SK-N-SH (cell line): ENCODE measurements at regions of chr5 and their contacts with region 1.

Region 1: DNA sequence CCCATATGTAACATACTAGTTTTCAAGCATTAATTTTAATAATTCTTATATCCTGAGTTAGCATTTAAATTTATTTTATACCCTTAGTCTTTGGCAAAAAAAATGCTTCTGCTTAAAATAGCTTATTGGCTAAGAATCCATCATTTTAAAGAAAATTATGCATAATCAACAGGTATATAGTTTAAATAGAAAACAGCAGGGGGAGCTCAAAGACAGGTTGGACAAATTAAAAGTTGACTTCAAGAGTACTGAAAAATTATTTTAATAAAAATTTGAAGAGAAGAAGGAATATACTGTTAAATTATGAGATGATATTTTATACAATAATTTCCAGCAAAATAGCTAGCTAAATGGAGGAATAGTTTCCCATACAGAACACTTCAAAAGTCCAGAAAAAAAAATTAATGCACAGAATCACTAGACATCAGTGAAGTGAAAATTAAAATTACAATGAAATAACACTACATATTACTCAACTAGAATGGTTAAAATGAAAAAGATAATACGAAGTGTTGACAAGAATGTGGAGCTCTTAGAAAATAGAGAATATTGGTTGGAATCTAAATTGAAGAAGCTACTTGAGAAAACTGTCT is 387.1 kb downstream of the PDE4D start:
- DNase-seq: no peak
- H3K4me3 ChIP-seq: no peak overlapping the region
- H3K27ac ChIP-seq: no peak overlapping the region
- H3K4me1 ChIP-seq: no peaks in the 10 kb centered on the region
- H3K27me3 ChIP-seq: no peaks in the 10 kb centered on the region
- CTCF ChIP-seq: peak; percentile 77
- EP300 ChIP-seq: no peak
- RAD21 ChIP-seq: peak; percentile 76

Region 2: DNA sequence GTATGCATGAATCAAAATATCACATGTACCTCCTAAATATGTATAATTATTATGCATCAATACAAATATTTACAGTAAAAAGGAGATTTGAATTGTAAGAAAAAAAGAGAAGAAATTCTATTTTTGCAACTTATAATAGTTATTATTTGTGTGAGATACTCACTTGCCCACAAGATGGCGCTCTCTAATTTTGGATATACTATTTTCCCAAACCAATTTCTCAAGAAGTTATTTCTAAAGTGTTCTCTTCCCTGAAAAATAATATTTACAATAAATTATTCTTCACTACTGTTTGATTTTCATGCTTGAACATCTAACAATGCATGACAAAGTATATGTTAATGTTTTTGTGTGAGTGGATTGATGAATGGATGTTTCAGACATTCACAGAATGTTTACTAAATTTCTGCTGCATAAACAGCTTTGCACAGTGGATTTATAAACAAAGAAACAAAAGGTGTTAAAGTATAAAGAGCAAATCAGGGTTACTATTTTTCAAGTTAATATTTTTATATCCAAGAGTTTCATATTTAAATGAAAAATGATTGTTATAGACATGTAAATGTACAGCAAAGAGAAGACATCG is 116.2 kb before region 1 on chr5:
- CTCF ChIA-PET with region 1: interaction called, 27 read pairs
- POLR2A ChIA-PET with region 1: no interaction called
- DNase-seq: no peak
- H3K4me3 ChIP-seq: no peak overlapping the region
- H3K27ac ChIP-seq: no peak overlapping the region
- H3K4me1 ChIP-seq: no peaks in the 10 kb centered on the region; a peak in 1 of 4 replicates
- H3K27me3 ChIP-seq: no peaks in the 10 kb centered on the region
- CTCF ChIP-seq: peak; percentile 88
- EP300 ChIP-seq: no peak
- RAD21 ChIP-seq: peak; percentile 78

Region 3: DNA sequence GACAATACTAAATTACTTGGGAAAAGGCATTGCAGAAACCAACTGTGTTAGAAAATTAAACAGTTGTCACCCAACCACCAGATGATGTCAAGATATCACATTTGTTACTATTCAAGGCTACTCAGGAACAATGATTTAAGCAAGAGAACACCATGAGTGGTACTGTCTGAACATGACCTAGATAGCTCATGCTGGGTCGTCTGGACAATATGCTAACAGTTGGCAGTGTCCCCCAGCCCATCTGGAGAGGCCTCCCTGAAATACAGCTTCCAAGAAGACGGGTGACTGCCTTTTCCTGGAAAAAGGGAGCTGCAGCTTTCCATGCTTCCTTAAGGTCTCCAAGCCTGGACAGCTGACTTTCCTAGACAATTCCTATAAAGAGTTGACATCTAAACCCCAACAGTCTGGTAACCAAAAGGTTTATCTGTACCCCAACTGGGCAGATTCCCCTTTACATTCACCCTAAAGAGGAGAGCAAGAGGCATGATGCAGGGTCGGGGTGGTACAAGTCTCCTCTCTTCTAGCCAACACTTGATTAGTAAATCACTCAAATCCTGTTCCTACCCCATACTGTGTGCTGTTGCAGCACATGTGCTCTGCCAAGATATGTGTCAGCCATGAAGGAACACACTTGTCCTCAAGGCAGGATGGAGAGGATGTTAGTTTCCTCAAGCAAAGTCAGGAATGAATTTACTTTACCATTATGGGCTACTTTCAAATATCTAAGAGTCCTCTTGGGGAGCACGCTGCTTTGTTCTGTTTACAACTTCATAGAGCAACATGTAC is 45.8 kb before region 1 on chr5:
- CTCF ChIA-PET with region 1: no interaction called
- POLR2A ChIA-PET with region 1: no interaction called
- DNase-seq: no peak
- H3K4me3 ChIP-seq: no peak overlapping the region
- H3K27ac ChIP-seq: no peak overlapping the region; a peak in 1 of 4 replicates
- H3K4me1 ChIP-seq: peaks cover 0 to 6% of the 10 kb centered on the region in 2 experiments; a peak in 1 of 4 replicates
- H3K27me3 ChIP-seq: no peaks in the 10 kb centered on the region
- CTCF ChIP-seq: no peak
- EP300 ChIP-seq: no peak
- RAD21 ChIP-seq: no peak

Region 4: GRCh38 chr5:59522201-59522831 is 15.9 kb after region 1 on chr5:
- CTCF ChIA-PET with region 1: interaction called, 10 read pairs
- POLR2A ChIA-PET with region 1: no interaction called
- DNase-seq: no peak
- H3K4me3 ChIP-seq: no peak overlapping the region
- H3K27ac ChIP-seq: no peak overlapping the region
- H3K4me1 ChIP-seq: peaks cover 0 to 4% of the 10 kb centered on the region in 2 experiments; a peak in 2 of 4 replicates
- H3K27me3 ChIP-seq: no peaks in the 10 kb centered on the region
- CTCF ChIP-seq: no peak
- EP300 ChIP-seq: no peak
- RAD21 ChIP-seq: no peak

Region 5: DNA sequence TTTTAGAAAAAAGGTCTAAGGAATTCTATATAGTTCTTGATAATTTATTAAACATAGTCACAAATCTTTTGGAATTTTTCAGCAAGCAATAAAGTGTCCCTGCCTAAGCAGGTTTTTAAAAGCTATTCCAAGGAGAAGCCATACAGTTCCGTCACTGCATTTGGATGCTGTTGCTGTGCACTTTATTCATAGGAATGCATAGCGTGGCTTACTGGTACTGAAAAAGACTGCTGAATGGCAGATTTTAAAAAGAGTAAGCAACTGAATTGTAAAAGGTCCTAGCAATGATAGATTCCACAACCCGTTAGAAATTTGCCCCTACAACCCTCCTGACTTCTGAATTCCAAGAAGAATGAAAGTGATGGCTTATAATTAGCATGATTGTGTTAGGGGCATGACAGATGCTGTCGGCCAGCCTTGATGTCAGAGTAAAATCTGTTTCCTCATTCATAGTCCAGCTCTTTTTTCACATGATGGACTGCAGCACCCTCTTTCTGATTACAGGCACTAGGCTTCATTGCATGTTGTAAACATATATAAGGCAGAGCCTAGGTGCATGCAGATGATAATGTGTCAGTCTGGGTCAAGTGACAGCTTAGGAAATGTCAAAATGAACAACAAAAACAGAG is 160.2 kb after region 1 on chr5:
- CTCF ChIA-PET with region 1: interaction called, 51 read pairs
- POLR2A ChIA-PET with region 1: no interaction called
- DNase-seq: no peak
- H3K4me3 ChIP-seq: no peak overlapping the region
- H3K27ac ChIP-seq: peak overlapping the region in 1 of 2 experiments; percentile 29; a peak in 1 of 4 replicates
- H3K4me1 ChIP-seq: peaks cover 0 to 18% of the 10 kb centered on the region in 2 experiments; a peak in 2 of 4 replicates
- H3K27me3 ChIP-seq: no peaks in the 10 kb centered on the region
- CTCF ChIP-seq: no peak
- EP300 ChIP-seq: no peak
- RAD21 ChIP-seq: peak; percentile 46

Region 6: GRCh38 chr5:59790399-59791125 is 284.2 kb after region 1 on chr5:
- CTCF ChIA-PET with region 1: interaction called, 10 read pairs
- POLR2A ChIA-PET with region 1: no interaction called
- DNase-seq: no peak
- H3K4me3 ChIP-seq: no peak overlapping the region
- H3K27ac ChIP-seq: no peak overlapping the region
- H3K4me1 ChIP-seq: peaks cover 22 to 31% of the 10 kb centered on the region in 2 experiments; a peak in 3 of 4 replicates
- H3K27me3 ChIP-seq: no peaks in the 10 kb centered on the region
- CTCF ChIP-seq: no peak
- EP300 ChIP-seq: no peak
- RAD21 ChIP-seq: no peak